ENCODE measurements at regions of chrX and their contacts with region 1.

Region 1: DNA sequence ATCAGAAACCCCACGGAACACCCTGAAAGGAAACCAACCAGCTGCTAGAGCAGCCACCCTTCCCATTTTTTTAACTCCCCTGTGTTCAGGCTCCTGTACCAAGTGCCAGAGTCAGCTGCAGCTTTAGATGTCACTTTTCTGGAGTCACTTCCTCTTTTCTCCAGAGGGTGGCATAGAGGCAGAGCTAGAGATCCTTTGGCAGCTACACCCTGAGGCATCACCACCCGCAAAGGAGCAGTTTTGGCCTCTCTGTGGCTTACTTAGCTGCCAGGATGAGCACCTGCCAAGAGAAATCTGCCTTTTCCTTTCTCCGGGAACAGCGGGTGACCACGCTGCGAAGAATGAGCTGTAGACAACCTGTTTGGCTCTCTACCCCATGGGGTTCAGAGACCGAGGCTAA is 58.0 kb upstream of the CHRDL1 start:
- DNase-seq: no peak
- H3K4me3 ChIP-seq: no peak overlapping the region
- CTCF ChIP-seq: peak; percentile 7

Region 2: GRCh38 chrX:110563282-110563681 is 290.3 kb before region 1 on chrX:
- CTCF ChIA-PET with region 1: no interaction called
- POLR2A ChIA-PET with region 1: no interaction called
- DNase-seq: no peak
- H3K4me3 ChIP-seq: no peak overlapping the region
- CTCF ChIP-seq: no peak

Region 3: GRCh38 chrX:111244235-111244750 is 390.7 kb after region 1 on chrX:
- CTCF ChIA-PET with region 1: interaction called, 17 read pairs
- POLR2A ChIA-PET with region 1: no interaction called
- DNase-seq: no peak
- H3K4me3 ChIP-seq: no peak overlapping the region
- CTCF ChIP-seq: no peak